A673 (cell line): ENCODE measurements at regions of chr1 and their contacts with region 1.

Region 1: GRCh38 chr1:205523891-205524793 is 19.7 kb downstream of the CDK18 start:
- DNase-seq: peak; percentile 84
- H3K4me3 ChIP-seq: no peak overlapping the region
- H3K27ac ChIP-seq: no peak overlapping the region
- H3K4me1 ChIP-seq: peaks cover 24% of the 10 kb centered on the region
- H3K27me3 ChIP-seq: no peaks in the 10 kb centered on the region
- CTCF ChIP-seq: peak; percentile 87

Region 2: DNA sequence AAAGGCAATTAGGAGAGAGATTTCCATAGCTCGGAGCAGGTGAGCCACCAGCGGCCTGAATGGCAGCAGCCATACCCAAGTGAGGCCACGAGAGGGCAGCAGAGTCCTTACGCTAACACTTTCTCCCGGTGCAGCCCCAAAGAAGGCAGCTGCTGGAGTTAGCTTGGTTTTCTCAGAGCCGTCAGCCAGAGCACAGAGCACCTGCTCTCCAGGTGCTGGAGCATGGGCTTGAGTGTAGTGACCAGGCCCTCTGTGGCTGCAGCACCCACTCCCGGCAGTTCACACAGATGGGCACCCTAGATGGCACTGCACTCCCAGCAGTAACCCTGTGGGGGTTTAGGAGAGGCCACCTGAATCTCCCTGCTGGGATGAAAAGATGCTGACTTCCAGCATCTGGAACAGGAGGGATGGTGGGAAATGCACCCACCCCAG is 250.6 kb before region 1 on chr1:
- CTCF ChIA-PET with region 1: interaction called, 9 read pairs
- POLR2A ChIA-PET with region 1: no interaction called
- intact Hi-C with region 1: loop called (anchors 5 kb)
- DNase-seq: peak; percentile 77
- H3K4me3 ChIP-seq: no peak overlapping the region
- H3K27ac ChIP-seq: no peak overlapping the region
- H3K4me1 ChIP-seq: no peaks in the 10 kb centered on the region
- H3K27me3 ChIP-seq: no peaks in the 10 kb centered on the region
- CTCF ChIP-seq: peak; percentile 96

Region 3: GRCh38 chr1:205354259-205354904 is 169.8 kb before region 1 on chr1:
- CTCF ChIA-PET with region 1: interaction called, 33 read pairs
- POLR2A ChIA-PET with region 1: no interaction called
- intact Hi-C with region 1: loop called (anchors 1 kb)
- DNase-seq: peak; percentile 81
- H3K4me3 ChIP-seq: no peak overlapping the region
- H3K27ac ChIP-seq: no peak overlapping the region
- H3K4me1 ChIP-seq: peaks cover 15% of the 10 kb centered on the region
- H3K27me3 ChIP-seq: no peaks in the 10 kb centered on the region
- CTCF ChIP-seq: peak; percentile 94

Region 4: GRCh38 chr1:205430696-205431305 is 93.3 kb before region 1 on chr1:
- CTCF ChIA-PET with region 1: interaction called, 13 read pairs
- POLR2A ChIA-PET with region 1: no interaction called
- intact Hi-C with region 1: no loop called
- DNase-seq: peak; percentile 74
- H3K4me3 ChIP-seq: peak overlapping the region; percentile 47
- H3K27ac ChIP-seq: peak overlapping the region; percentile 24
- H3K4me1 ChIP-seq: peaks cover 23% of the 10 kb centered on the region
- H3K27me3 ChIP-seq: no peaks in the 10 kb centered on the region
- CTCF ChIP-seq: peak; percentile 98

Region 5: DNA sequence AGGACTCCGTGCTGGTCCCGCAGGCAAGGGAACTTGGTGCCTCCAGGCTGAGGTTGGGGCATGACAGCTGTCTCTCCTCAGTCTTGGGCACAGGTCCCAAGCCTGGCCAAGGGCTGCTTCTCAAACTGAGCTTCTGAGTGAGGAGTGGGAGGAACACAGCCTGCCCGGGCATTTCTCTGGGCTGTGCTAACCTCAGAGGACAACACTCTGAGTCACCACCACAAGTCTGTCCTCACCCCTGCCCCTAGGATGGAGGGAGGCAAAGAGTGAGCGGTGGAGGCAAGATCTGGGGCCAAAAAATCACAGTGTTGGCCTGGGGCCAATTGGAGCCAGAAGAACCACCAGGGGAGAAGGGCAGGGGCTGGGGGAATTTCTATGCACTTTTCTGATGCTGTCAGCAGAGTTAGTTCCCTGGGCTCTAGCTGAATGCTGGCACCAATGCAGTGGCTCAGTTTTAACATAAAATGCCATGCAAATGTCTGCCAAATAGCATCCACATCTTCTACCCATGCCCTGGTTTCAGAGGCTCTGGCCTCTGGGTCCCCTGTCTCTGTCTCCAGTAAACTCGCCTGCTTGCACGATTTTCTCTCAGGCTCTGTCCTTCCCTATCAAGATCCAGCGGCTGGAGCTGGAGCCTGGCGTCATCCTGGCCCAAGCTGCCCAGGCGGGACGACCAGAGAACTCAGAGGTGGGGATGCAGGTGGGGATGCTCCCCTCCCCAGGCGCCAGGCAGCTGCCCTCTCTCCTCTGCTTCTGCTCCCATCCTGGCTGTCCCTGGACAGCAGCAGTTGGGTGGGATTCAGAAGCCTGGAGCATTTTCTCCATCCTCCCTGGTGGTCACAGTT is 30.7 kb before region 1 on chr1:
- CTCF ChIA-PET with region 1: interaction called, 93 read pairs
- POLR2A ChIA-PET with region 1: no interaction called
- intact Hi-C with region 1: loop called (anchors 1 kb)
- DNase-seq: peak; percentile 46
- H3K4me3 ChIP-seq: no peak overlapping the region
- H3K27ac ChIP-seq: no peak overlapping the region
- H3K4me1 ChIP-seq: peaks cover 47% of the 10 kb centered on the region
- H3K27me3 ChIP-seq: no peaks in the 10 kb centered on the region
- CTCF ChIP-seq: no peak

Region 6: GRCh38 chr1:205858141-205858961 is 334.2 kb after region 1 on chr1:
- CTCF ChIA-PET with region 1: no interaction called
- POLR2A ChIA-PET with region 1: no interaction called
- intact Hi-C with region 1: no loop called
- DNase-seq: no peak
- H3K4me3 ChIP-seq: no peak overlapping the region
- H3K27ac ChIP-seq: no peak overlapping the region
- H3K4me1 ChIP-seq: no peaks in the 10 kb centered on the region
- H3K27me3 ChIP-seq: peaks cover 32% of the 10 kb centered on the region
- CTCF ChIP-seq: no peak